ENCODE measurements at regions of chr11 and their contacts with region 1.

Region 1: GRCh38 chr11:66579017-66579606 is 10.7 kb upstream of the CTSF start:
- DNase-seq: peak in 1 of 2 experiments; percentile 61
- H3K4me3 ChIP-seq: no peak overlapping the region
- H3K27ac ChIP-seq: no peak overlapping the region
- H3K4me1 ChIP-seq: no peaks in the 10 kb centered on the region
- H3K27me3 ChIP-seq: peaks cover 54% of the 10 kb centered on the region
- CTCF ChIP-seq: peak; percentile 84

Region 2: DNA sequence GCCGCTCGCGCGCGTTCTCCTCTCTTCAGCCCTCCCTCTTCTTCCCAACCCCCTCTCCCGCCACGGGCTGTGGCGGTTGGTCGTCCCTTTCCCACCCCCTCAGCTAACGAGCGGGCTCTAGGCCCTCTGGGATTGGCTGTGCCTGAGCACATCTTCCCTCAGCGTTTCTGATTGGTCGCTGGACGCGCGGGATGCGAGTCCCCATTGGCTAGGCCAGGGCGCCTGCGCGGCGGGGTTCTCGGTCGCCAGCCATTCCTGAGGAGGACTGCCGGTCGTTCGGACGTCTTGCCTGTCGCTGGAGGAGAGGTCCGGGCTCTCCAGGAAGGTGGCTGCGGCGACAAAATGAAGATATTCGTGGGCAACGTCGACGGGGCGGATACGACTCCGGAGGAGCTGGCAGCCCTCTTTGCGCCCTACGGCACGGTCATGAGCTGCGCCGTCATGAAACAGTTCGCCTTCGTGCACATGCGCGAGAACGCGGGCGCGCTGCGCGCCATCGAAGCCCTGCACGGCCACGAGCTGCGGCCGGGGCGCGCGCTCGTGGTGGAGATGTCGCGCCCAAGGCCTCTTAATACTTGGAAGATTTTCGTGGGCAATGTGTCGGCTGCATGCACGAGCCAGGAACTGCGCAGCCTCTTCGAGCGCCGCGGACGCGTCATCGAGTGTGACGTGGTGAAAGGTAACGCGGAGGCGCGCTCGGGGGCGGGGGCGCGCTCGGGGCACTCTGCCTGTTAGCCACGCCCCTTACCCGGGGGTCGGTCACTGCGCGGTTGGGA is 37.5 kb after region 1 on chr11 and contains the start of gene RBM14:
- CTCF ChIA-PET with region 1: no interaction called
- POLR2A ChIA-PET with region 1: no interaction called
- intact Hi-C with region 1: no loop called
- DNase-seq: peak; percentile 99
- H3K4me3 ChIP-seq: peak within 1 kb of the TSS; percentile 73
- H3K27ac ChIP-seq: peak within 1 kb of the TSS; percentile 73
- H3K4me1 ChIP-seq: peaks cover 41% of the 10 kb centered on the region
- H3K27me3 ChIP-seq: no peaks in the 10 kb centered on the region
- CTCF ChIP-seq: no peak
- total RNA-seq, gene RBM14: 108 and 112 TPM in 2 replicates

Region 3: DNA sequence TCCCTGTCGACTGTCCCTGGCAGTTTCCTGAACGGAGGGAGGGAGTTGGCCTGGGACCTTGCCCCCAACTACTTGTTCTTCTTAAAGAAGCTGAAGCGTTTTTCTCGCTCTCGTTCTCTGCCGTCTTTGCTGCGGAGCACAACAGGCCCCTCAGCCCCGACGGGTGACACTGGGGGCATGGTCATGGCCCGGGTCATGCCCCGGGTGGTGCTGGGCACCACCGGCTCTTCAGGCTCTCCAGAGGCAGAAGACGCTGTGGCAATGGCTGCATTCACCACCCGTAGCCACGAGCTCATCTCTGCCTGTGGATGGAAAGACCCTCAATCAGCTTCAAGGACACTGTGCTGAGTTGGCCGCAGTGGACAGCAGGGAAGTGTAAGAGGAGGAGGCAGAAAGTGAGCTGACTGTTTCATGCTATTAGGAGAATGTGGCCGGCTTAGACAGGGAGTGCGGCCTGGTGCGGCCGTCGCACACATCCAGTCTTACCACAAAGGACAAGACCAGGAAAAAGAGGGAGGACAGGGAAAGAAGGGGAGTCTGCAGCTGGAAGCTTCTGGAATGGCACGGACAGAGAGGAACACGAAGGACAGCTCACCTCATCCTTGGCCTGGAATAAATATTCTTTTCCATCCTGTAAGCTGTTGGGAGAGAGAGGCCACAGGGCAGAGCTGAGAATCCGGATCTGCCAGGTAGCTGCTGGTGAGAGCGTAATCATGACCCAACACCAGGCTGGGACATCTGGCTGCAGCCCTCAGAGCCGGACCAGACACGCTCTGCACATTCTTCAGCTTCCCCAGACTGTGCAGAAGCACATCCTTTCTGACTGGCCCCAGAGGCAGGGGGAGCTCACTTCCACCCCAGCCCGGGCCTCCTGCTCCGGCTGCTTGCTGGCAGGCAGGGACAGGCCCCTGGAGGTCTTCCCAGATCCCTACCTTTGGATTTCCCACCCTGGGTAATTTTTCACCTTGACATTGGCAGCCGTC is 107.0 kb after region 1 on chr11:
- CTCF ChIA-PET with region 1: no interaction called
- POLR2A ChIA-PET with region 1: interaction called, 14 read pairs
- intact Hi-C with region 1: no loop called
- DNase-seq: no peak
- H3K4me3 ChIP-seq: no peak overlapping the region
- H3K27ac ChIP-seq: no peak overlapping the region
- H3K4me1 ChIP-seq: no peaks in the 10 kb centered on the region
- H3K27me3 ChIP-seq: no peaks in the 10 kb centered on the region
- CTCF ChIP-seq: no peak

Measured in PC-9 (cell line).